GM13977 (cell line): ENCODE measurements at regions of chr9 and their contacts with region 1.

Region 1: GRCh38 chr9:19925817-19926503 is 137.1 kb upstream of the SLC24A2 start:
- DNase-seq: peak; percentile 82
- CTCF ChIP-seq: peak; percentile 95

Region 2: DNA sequence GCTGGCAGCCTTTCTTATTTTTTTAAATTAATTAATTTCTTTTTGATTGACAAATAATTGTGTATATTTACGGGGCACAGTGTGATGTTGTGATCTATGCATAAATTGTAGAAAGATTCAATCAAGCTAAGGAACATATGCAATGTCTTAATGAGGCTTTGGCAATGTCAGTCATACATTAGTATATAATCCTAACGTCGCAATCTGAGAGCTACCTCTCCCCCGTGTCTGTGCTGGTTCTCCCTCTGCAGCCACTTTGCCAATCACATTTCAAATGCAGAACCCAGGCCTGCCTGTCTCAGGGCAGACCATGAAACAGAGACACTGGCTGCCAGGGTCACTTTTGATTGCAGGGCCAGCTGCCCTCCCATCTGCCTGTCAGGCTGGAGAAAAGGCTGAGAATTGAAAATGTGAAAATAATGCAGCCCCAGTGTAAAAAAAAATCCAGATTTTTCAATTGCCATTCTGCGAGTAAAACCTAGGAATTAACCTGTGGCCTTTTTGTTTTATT is 193.5 kb before region 1 on chr9:
- in situ Hi-C with region 1: no loop called
- DNase-seq: no peak
- CTCF ChIP-seq: no peak

Region 3: GRCh38 chr9:20256284-20256948 is 330.5 kb after region 1 on chr9:
- in situ Hi-C with region 1: no loop called
- DNase-seq: no peak
- CTCF ChIP-seq: no peak

Region 4: DNA sequence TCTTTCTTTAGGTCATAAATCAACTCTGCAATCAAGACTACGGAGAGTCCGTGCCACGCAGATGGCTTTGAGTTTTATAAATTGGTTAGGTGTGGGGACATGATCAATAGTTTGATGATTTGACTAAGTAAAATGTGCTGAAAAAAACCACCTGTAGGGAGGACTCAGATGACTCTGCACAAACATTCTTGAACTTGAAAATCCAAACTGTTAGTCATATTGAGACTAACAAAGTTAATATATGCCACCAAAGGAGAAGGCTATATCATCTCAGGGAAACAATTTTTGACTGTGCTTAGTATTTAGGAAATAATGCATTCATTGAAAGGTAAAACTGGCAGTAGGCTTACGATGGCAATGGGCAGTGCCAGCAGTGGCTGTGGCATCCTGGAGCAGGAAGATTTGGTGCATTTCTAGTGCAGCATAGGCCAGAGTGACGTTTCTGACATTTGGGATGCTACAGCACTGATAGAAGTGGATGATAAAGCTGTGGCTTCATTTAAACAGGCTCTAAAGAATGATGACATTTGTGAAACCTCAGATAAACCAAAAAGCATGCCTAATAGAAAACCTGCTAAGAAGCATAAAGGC is 405.2 kb after region 1 on chr9:
- in situ Hi-C with region 1: loop called (anchors 25 kb)
- DNase-seq: no peak
- CTCF ChIP-seq: no peak

Region 5: GRCh38 chr9:20941174-20941690 is 1015.3 kb after region 1 on chr9:
- in situ Hi-C with region 1: loop called (anchors 10 kb)
- DNase-seq: peak; percentile 54
- CTCF ChIP-seq: peak; percentile 83

Region 6: DNA sequence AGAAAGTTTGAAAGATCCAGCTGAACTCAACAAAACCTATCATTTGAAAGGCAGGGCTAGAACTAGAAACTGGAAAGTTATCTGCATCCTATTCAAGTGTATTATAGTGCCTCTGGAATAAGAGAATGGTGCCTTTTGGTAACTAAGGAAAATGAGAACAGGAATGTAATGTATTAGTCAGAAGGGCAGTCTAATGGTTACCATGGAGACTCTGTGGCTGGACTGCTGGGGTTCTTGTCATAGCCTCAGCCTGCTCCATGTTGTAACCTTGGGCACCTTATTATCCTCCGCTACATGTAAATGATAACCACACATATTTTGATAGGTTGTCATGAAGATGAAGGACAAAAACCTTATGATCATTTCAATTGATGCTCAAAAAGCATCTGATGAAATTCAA is 1176.3 kb after region 1 on chr9:
- in situ Hi-C with region 1: loop called (anchors 10 kb)
- DNase-seq: no peak
- CTCF ChIP-seq: no peak